K562 (cell line): ENCODE measurements at regions of chr22 and their contacts with region 1.

Region 1: GRCh38 chr22:41621099-41621910 is at the start of gene XRCC6:
- DNase-seq: peak; percentile 95 to 98 (median 96)
- ATAC-seq: peak; percentile 90
- H3K4me3 ChIP-seq: peak within 1 kb of the TSS; percentile 92
- H3K27ac ChIP-seq: peak within 1 kb of the TSS; percentile 100
- H3K4me1 ChIP-seq: peaks cover 13 to 17% of the 10 kb centered on the region in 2 experiments; a peak in 4 of 5 replicates
- H3K27me3 ChIP-seq: no peaks in the 10 kb centered on the region
- CTCF ChIP-seq: no peak
- EP300 ChIP-seq: no peak
- POLR2A ChIP-seq: peak; percentile 92
- RAD21 ChIP-seq: no peak
- polyA plus RNA-seq, gene XRCC6: 151 to 440 TPM

Region 2: DNA sequence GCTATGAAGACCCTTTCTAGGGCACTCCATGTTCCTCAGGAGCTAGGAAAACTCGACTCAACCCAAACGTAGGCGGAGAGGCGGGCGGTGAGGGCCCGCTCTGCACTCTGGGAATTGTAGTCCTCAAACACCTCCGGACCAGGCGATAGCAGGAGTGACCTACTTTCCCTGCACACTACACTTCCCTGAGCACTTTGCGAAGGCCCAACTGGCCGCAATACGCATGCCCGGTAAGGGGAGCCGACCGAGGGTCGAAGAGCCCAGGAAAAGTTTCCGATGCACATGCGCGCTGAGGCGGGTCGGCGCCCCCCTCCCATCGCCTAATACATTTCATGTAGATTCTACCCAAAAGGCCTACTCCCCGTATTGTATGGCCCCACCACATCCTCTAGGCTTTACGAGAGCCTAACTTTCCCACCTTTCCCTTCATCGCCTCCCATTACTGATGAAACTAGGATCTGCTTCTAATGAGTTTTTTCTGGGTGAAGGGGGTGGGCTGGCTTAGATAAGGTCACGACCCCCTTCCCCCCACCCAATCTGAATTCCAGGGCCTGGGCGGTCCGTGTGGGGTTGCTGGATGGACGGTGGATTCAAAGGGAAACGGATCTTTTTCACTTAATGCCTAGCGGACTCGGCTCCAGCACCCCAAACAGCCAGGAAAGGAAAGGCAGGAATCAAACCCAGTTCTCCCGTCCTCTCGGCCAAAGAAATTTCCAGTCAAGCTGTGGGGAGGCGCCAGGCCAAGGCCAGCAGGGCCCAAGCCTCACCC is 176.8 kb before region 1 on chr22:
- CTCF ChIA-PET with region 1: no interaction called
- POLR2A ChIA-PET with region 1: no interaction called
- in situ Hi-C with region 1: no loop called
- intact Hi-C with region 1: no loop called
- DNase-seq: peak; percentile 34 to 95 (median 64)
- ATAC-seq: peak; percentile 78
- H3K4me3 ChIP-seq: peak overlapping the region; percentile 92
- H3K27ac ChIP-seq: peak overlapping the region; percentile 94
- H3K4me1 ChIP-seq: peaks cover 6 to 26% of the 10 kb centered on the region in 2 experiments; a peak in 4 of 5 replicates
- H3K27me3 ChIP-seq: no peaks in the 10 kb centered on the region
- CTCF ChIP-seq: no peak
- EP300 ChIP-seq: no peak
- POLR2A ChIP-seq: no peak
- RAD21 ChIP-seq: no peak

Region 3: GRCh38 chr22:41603873-41604332 is 17.4 kb before region 1 on chr22:
- CTCF ChIA-PET with region 1: no interaction called
- POLR2A ChIA-PET with region 1: interaction called, 11 read pairs
- in situ Hi-C with region 1: no loop called
- intact Hi-C with region 1: no loop called
- DNase-seq: peak; percentile 52 to 89 (median 72)
- ATAC-seq: peak; percentile 94
- H3K4me3 ChIP-seq: no peak overlapping the region
- H3K27ac ChIP-seq: peak overlapping the region; percentile 41; the same call in 2 of the 3 replicates
- H3K4me1 ChIP-seq: peaks cover 25 to 28% of the 10 kb centered on the region in 2 experiments
- H3K27me3 ChIP-seq: no peaks in the 10 kb centered on the region
- CTCF ChIP-seq: no peak
- EP300 ChIP-seq: peak; percentile 81
- POLR2A ChIP-seq: no peak
- RAD21 ChIP-seq: no peak; a peak in 1 of 4 replicates